ENCODE measurements at regions of chr2 and their contacts with region 1.

Region 1: DNA sequence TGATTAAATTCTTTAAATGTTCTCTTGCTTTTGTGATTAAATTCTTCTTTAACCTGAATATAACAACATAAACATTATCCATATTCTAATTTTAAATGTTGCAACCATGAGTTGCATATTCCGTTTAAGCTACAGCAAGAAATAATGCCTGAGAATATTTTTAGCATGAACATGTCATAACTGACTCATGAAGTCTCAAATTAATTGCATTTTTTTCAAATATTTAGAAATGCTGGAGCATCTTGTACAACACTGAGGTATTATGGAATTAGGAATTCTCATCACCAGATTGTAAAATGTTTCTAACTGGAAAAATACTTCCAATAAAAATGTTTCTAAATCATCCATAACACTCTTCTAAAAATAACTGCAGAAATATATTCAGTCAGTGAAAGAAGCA is 14.7 kb downstream of the ROCK2 start:
- DNase-seq: no peak

Region 2: GRCh38 chr2:11681722-11682589 is 352.2 kb after region 1 on chr2:
- intact Hi-C with region 1: loop called in 1 of 2 experiments (anchors 5 kb)
- DNase-seq: peak; percentile 67

Region 3: GRCh38 chr2:12141618-12142258 is 812.0 kb after region 1 on chr2:
- intact Hi-C with region 1: no loop called
- DNase-seq: no peak

Measured in posterior vena cava (tissue), 2 donors.